ENCODE measurements at regions of chr16 and their contacts with region 1.

Region 1: GRCh38 chr16:89507834-89508590 is at the start of gene SPG7:
- DNase-seq: peak; percentile 82
- ATAC-seq: peak; percentile 87
- H3K4me3 ChIP-seq: peak within 1 kb of the TSS; percentile 78
- H3K27ac ChIP-seq: peak within 1 kb of the TSS; percentile 91
- H3K4me1 ChIP-seq: peaks cover 15% of the 10 kb centered on the region
- H3K27me3 ChIP-seq: no peaks in the 10 kb centered on the region
- CTCF ChIP-seq: 0 out of 2 replicates have a peak, but pooled peaks have one; percentile 2
- POLR2A ChIP-seq: peak; percentile 82
- RAD21 ChIP-seq: no peak
- total RNA-seq, gene SPG7: 95.3 and 96.8 TPM in 2 replicates

Region 2: GRCh38 chr16:89241187-89242007 is 266.6 kb before region 1 on chr16:
- CTCF ChIA-PET with region 1: no interaction called
- POLR2A ChIA-PET with region 1: no interaction called
- dilution Hi-C with region 1: no loop called
- in situ Hi-C with region 1: no loop called
- intact Hi-C with region 1: loop called (anchors 2 kb)
- DNase-seq: peak; percentile 82
- ATAC-seq: peak; percentile 67
- H3K4me3 ChIP-seq: peak overlapping the region; percentile 73
- H3K27ac ChIP-seq: peak overlapping the region; percentile 96
- H3K4me1 ChIP-seq: 0 out of 2 replicates have a peak, but pooled peaks cover 2% of the 10 kb centered on the region
- H3K27me3 ChIP-seq: no peaks in the 10 kb centered on the region
- CTCF ChIP-seq: no peak
- POLR2A ChIP-seq: peak; percentile 91
- RAD21 ChIP-seq: no peak

Region 3: DNA sequence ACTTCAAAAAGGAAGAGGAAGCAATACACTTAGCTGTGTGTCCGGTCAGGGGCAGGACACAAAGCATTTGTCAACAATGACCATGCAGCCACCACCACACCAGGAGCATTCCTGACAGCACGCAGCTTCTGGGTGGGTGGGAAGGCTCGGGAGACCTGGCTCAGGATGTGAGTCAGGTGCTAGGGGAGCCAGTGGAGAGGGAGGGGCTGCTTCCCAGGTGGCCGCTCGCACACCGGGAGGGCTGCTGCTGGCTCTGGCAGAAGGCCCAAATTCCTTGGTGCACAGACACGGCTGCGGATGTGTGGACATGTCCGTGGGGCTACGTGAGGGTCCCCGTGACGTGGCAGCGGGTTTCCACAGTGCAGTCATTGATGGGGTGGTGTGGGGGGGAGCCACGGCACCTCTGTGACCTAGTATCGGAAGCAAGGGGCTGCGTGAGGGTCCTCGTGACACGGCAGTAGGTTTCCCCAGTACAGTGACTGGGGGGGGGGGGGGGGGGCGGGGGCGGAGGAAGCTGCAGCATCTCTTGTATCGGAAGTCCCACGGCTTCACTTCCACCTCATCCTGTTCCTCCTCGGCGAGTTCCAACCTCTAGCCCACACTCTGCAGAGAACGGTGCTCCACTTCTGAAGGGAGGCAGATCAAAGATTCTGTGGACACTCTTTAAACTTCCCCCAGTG is 177.7 kb before region 1 on chr16:
- CTCF ChIA-PET with region 1: no interaction called
- POLR2A ChIA-PET with region 1: no interaction called
- dilution Hi-C with region 1: no loop called
- in situ Hi-C with region 1: loop called (anchors 10 kb)
- intact Hi-C with region 1: loop called (anchors 1 kb)
- DNase-seq: peak; percentile 52
- ATAC-seq: no peak
- H3K4me3 ChIP-seq: no peak overlapping the region
- H3K27ac ChIP-seq: peak overlapping the region; percentile 12
- H3K4me1 ChIP-seq: peaks cover 37% of the 10 kb centered on the region
- H3K27me3 ChIP-seq: no peaks in the 10 kb centered on the region
- CTCF ChIP-seq: no peak
- POLR2A ChIP-seq: no peak
- RAD21 ChIP-seq: no peak

Region 4: GRCh38 chr16:89374393-89374960 is 133.5 kb before region 1 on chr16:
- CTCF ChIA-PET with region 1: no interaction called
- POLR2A ChIA-PET with region 1: no interaction called
- dilution Hi-C with region 1: no loop called
- in situ Hi-C with region 1: no loop called
- intact Hi-C with region 1: loop called (anchors 5 kb)
- DNase-seq: peak; percentile 55
- ATAC-seq: peak; percentile 37
- H3K4me3 ChIP-seq: no peak overlapping the region
- H3K27ac ChIP-seq: no peak overlapping the region
- H3K4me1 ChIP-seq: peaks cover 26% of the 10 kb centered on the region
- H3K27me3 ChIP-seq: no peaks in the 10 kb centered on the region
- CTCF ChIP-seq: 0 out of 2 replicates have a peak, but pooled peaks have one; percentile 14
- POLR2A ChIP-seq: no peak
- RAD21 ChIP-seq: no peak

Measured in IMR-90 (cell line).